ENCODE measurements at regions of chr7 and their contacts with region 1.

Region 1: GRCh38 chr7:47100817-47101435 is 481.0 kb downstream of the TNS3 start:
- DNase-seq: peak; percentile 89
- H3K4me3 Mint-ChIP-seq: no peak overlapping the region
- H3K27ac Mint-ChIP-seq: no peak overlapping the region
- H3K4me1 Mint-ChIP-seq: peaks cover 8% of the 10 kb centered on the region
- H3K27me3 Mint-ChIP-seq: no peaks in the 10 kb centered on the region
- CTCF ChIP-seq: peak; percentile 74

Region 2: DNA sequence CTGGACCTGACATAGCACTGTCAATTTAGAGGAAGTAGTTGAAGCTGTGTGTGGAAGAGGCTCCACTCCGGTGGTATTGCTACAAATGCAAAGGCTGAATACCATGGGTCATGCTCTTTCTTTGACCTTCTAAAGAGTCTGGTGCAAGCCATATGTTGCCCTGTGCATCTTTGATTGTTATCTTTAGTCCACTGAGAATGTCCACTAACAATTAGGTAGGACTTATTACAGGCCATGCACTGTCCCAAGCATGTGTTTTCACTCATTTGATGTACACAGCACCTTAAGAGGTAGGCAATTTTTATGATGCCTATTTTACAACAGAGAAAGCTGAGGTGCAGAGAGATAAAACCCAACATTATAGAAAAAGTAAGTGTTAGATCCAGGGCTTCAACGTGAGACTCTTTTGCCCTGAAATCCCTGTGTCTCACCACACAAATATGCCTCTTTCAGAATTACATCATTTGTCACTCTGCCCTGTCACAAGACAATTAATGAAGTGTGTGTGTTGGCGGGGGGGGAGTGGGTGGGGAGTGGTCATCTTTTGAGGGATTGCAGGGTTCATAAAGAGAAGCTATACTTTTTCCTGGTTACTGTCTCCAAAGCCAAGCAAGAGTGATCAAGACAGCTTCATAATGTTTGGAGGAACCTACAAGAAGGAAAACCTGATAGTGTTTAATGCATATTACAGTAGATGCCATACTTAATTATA is 542.3 kb before region 1 on chr7:
- CTCF ChIA-PET with region 1: no interaction called
- intact Hi-C with region 1: no loop called
- DNase-seq: no peak
- H3K4me3 Mint-ChIP-seq: no peak overlapping the region
- H3K27ac Mint-ChIP-seq: peak overlapping the region; percentile 96
- H3K4me1 Mint-ChIP-seq: peaks cover 62% of the 10 kb centered on the region
- H3K27me3 Mint-ChIP-seq: no peaks in the 10 kb centered on the region
- CTCF ChIP-seq: no peak

Region 3: DNA sequence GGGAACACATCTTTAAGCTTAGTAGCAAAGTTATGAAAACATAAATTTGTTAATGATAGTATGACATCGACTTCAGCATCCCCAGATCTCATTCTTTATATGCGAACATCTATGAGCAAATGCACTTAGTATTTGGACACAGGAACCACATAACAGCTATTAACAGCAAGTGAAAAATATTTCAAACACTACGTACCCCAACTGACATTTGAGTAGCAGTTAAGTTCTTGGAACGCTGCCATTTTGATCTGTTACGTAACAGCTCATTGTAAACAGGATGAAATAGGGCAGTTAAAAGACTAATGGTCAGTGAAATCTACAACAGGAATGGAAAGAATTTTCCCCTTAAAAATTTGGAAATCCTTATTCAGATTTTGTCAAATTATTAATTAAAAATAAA is 52.1 kb after region 1 on chr7:
- CTCF ChIA-PET with region 1: interaction called, 11 read pairs
- intact Hi-C with region 1: loop called (anchors 5 kb)
- DNase-seq: peak; percentile 73
- H3K4me3 Mint-ChIP-seq: peak overlapping the region; percentile 47
- H3K27ac Mint-ChIP-seq: peak overlapping the region; percentile 80
- H3K4me1 Mint-ChIP-seq: peaks cover 51% of the 10 kb centered on the region
- H3K27me3 Mint-ChIP-seq: no peaks in the 10 kb centered on the region
- CTCF ChIP-seq: no peak

Region 4: GRCh38 chr7:47170516-47170915 is 69.6 kb after region 1 on chr7:
- CTCF ChIA-PET with region 1: interaction called, 5 read pairs
- intact Hi-C with region 1: loop called (anchors 1 kb)
- DNase-seq: peak; percentile 32
- H3K4me3 Mint-ChIP-seq: no peak overlapping the region
- H3K27ac Mint-ChIP-seq: no peak overlapping the region
- H3K4me1 Mint-ChIP-seq: peaks cover 26% of the 10 kb centered on the region
- H3K27me3 Mint-ChIP-seq: no peaks in the 10 kb centered on the region
- CTCF ChIP-seq: peak; percentile 56

Region 5: DNA sequence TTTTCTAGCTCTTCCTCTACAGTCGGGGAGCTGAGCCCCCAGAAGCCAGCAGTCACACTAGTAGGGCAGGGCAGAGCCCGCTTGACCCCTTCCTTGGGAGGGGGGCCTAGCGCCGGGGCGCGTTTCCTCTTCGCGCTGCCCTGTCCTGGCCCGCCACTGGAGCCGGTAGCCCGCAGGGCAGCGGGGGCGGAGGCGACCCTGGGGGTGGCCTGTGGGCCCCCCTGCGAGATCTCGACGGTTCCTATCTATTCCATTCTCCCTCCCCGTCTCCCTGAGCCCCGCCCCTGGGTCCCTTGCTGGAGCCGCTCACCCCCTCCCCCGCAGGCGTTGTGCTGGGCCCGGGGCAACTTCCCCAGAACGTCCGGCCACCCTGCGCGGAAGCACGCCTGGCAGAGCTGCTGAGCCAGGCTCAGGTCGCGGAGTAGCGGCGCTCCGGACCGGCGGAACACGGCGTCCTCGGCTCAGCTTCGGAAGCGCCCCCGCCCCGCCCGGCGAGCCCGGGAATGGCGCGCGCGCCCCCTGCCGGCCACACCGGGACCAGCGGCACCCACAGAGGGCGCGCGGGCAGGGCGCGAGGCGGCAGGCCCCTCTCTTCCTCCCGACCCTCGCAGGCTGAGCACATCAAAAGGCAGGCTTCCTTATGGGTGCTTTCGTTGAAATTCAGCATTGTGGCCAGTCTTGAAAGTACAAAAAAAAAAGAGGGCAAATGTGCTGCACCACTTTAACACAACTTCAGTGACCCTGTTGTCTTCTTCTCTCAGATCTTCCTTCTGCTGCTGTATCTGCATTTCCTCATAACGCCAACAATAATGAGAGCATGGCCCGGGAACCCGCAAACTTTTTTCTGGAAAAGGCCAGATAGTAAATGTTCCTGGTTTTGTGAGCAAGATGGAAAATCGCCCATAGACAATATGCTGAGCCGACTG is 153.4 kb after region 1 on chr7:
- CTCF ChIA-PET with region 1: no interaction called
- intact Hi-C with region 1: loop called (anchors 5 kb)
- DNase-seq: peak; percentile 90
- H3K4me3 Mint-ChIP-seq: peak overlapping the region; percentile 69
- H3K27ac Mint-ChIP-seq: peak overlapping the region; percentile 32
- H3K4me1 Mint-ChIP-seq: peaks cover 9% of the 10 kb centered on the region
- H3K27me3 Mint-ChIP-seq: peaks cover 32% of the 10 kb centered on the region
- CTCF ChIP-seq: peak; percentile 99

Measured in Calu3 (cell line).